ENCODE measurements at regions of chr2 and their contacts with region 1.

Region 1: DNA sequence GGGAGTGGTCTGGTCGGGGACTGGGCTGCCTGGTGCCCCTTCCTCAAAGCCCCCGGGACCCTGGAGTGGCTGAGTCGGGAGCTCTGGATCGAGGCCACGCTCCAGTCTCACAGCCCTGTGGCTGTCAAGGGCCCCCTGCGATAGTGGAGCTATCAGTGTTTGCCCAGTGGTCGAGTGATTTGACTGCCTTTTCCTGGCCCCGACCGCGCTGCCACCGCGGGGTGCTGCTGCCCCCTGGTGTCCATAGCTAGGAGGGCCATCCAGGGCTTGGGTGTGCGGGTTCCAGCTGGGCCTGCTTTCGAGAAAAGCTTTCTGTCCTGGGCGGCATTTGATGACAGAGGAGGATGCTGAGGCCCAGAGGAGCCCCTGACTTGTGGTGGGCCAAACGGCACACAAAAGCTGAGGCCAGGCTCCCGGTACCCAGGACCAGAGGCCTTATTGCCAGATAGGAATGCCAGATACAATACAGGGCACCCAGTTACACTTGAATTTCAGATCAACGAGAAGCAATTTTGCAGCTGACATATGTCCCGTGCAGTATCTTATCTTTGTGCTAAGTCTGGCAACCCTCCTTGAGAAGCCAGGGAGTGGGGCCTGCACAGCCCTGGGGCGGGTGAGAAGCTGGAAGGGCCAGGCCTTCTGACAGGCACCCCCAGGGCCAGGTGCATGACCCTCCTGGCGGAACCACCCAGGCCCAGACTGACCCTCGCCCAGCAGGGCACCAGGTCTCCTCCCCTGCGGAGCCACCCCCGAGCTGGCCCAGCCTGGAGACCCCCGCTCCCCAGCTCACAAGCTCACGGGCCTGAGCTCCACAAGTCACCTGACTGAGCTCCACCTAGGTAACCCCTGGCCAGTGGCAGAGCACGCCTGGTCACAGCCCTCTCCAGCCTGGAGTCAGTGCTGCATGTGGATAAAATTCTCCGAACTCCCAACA is 13.0 kb downstream of the ODC1 start:
- DNase-seq: peak; percentile 85
- ATAC-seq: peak; percentile 85 to 86
- H3K4me3 ChIP-seq: no peak overlapping the region
- H3K27ac ChIP-seq: no peak overlapping the region
- H3K4me1 ChIP-seq: peaks cover 16% of the 10 kb centered on the region
- H3K27me3 ChIP-seq: no peaks in the 10 kb centered on the region
- CTCF ChIP-seq: peak; percentile 98

Region 2: DNA sequence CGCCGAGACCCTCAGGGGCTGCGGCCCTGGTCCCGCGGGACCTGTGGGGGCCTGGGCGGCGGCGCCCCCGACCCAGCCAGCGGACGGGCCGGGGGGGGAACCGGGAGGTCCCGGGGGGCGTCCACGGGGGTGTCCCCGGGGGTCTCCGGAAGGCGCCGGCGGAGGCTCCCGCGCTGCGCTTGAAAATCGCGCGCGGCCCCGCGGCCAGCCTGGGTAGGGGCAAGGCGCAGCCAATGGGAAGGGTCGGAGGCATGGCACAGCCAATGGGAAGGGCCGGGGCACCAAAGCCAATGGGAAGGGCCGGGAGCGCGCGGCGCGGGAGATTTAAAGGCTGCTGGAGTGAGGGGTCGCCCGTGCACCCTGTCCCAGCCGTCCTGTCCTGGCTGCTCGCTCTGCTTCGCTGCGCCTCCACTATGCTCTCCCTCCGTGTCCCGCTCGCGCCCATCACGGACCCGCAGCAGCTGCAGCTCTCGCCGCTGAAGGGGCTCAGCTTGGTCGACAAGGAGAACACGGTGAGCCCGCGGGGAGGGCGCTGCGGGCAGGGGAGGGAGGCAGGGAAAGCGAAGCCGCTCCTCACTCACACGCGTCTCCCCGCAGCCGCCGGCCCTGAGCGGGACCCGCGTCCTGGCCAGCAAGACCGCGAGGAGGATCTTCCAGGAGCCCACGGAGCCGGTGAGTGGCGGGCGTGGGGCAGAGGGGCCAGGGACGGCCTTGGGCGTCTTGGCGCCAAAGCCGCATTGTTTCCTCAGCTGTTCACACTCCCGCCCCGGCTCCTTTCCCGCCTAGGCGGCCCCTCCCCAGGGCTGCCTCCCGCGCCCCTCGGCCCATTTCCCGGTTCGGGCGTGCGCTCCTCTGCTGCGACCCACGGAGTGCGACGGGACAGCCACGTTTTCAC is 312.5 kb before region 1 on chr2 and contains the start of gene RRM2:
- intact Hi-C with region 1: loop called (anchors 5 kb)
- DNase-seq: peak; percentile 94
- ATAC-seq: peak; percentile 88 to 91
- H3K4me3 ChIP-seq: peak within 1 kb of the TSS; percentile 62
- H3K27ac ChIP-seq: no peak within 1 kb of the TSS
- H3K4me1 ChIP-seq: peaks cover 41% of the 10 kb centered on the region
- H3K27me3 ChIP-seq: peaks cover 16% of the 10 kb centered on the region
- CTCF ChIP-seq: no peak
- total RNA-seq, gene RRM2: 8.4 TPM